ENCODE measurements at regions of chr1 and their contacts with region 1.

Region 1: DNA sequence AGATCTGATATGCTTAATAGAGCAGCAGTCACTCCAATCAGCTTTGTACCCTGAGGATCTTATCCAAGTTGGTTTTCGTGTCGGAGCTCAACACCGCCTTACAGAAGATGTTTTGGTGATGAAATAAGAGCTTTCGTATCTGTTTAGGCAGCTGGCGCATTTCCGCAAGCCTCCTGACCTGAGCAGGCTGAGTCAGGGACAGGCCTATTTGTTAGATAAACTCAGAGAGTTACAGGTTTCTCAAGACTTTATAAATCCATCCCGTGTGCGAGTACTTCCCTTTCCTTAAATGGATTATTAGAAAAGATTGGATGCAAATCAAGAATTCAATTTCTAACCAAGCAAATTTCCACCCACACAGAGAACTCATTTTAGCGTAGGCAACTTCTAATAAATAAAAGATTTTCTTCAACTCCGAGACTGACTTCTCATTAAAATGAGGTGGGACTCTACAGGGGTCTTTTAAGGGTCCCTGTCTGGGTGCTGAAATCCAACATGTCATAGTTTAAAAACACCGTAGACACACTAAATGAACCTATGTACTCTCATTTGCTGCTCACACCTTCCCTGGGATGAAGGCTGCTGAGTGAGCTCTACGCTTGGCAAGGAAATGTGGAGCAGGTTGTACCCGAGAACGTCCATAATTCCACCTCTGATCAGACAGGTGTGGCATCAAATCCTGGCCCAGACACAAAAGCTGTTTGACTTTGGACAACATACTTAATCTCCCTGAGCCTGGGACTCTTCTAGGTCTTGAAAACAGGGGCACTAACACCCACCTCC is 106.9 kb upstream of the F3 start:
- DNase-seq: no peak
- ATAC-seq: peak; percentile 38

Region 2: GRCh38 chr1:94532077-94532476 is 116.3 kb before region 1 on chr1:
- intact Hi-C with region 1: loop called (anchors 10 kb)
- DNase-seq: no peak
- ATAC-seq: no peak

Region 3: GRCh38 chr1:94544706-94545490 is 103.5 kb before region 1 on chr1:
- intact Hi-C with region 1: no loop called
- DNase-seq: no peak
- ATAC-seq: no peak

Measured in Right ventricle myocardium superior (tissue), 1 donor.